ENCODE measurements at regions of chr19 and their contacts with region 1.

Region 1: GRCh38 chr19:1350867-1351266 is 32.8 kb upstream of the NDUFS7 start:
- DNase-seq: no peak
- H3K4me3 ChIP-seq: no peak overlapping the region
- H3K27ac ChIP-seq: no peak overlapping the region
- H3K4me1 ChIP-seq: peaks cover 3% of the 10 kb centered on the region; the same call in 1 of the 2 replicates
- H3K27me3 ChIP-seq: no peaks in the 10 kb centered on the region
- CTCF ChIP-seq: no peak

Region 2: DNA sequence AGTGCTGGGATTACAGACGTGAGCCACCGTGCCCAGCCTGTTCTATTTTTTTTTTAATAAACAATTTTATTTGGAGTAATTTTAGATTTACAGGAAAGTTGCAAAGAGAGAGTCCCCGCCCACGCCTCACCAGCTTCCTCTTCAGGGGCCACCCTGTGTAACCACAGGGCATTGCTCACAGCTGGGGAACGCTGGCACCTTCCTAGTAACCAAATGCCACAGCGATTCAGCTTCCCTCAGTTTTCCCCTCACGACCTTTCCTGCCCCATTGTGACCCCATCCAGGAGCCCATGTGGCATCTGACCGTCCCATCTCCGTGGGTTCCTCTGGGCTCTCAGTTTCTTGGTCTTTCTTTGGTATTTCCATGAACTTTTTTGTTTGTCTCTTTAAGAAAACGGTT is 1267.7 kb after region 1 on chr19:
- CTCF ChIA-PET with region 1: interaction called, 13 read pairs
- POLR2A ChIA-PET with region 1: no interaction called
- intact Hi-C with region 1: no loop called
- DNase-seq: peak; percentile 67 to 70
- H3K4me3 ChIP-seq: no peak overlapping the region
- H3K27ac ChIP-seq: peak overlapping the region; percentile 69
- H3K4me1 ChIP-seq: peaks cover 16% of the 10 kb centered on the region
- H3K27me3 ChIP-seq: no peaks in the 10 kb centered on the region
- CTCF ChIP-seq: no peak